HEK293 (cell line): ENCODE measurements at regions of chr1 and their contacts with region 1.

Region 1: DNA sequence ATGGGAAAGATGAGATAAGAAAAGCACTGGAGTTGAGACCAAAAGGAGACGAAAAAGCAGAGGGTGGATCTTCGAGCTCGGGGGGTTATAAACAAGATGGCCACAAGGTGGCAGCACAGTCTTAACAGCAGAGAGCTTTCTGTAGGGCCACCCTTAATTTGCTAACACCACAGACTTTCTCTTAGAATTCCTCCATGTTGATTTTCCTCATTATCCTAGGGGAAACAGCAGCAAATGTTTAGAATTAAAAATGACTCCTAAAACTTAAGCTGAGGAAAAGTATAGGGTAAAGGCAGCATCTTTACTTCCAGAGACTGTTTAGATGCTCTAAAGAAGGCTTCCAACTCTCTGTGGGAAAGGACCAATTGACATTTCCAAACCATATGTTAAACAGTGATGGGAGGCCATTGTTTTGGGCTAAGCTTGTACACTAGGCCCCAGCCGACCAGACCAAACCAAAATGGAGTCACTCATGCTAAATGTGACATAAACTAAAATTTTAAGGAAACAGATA is 2.5 kb upstream of the APOBEC4 start:
- H3K4me3 ChIP-seq: no peak overlapping the region
- H3K27ac ChIP-seq: no peak overlapping the region
- H3K4me1 ChIP-seq: no peaks in the 10 kb centered on the region
- CTCF ChIP-seq: peak; percentile 61

Region 2: DNA sequence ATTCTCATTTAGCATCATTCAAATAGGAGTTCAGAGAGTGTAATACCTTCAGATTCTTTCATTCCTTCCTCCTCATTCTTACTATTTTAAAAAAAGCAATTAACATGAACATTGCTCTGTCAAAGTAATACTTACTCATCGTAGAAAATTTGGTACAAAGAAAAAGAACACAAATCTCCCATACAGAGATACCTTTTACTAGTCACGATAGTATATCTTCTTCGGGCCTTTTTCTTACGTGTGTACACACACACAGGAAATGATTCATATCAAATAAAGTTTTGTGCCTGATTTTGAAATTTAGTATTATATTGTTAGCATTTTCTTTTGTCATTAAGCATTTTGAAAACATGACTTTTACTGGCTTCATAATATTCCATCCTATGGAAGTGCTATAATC is 118.2 kb before region 1 on chr1:
- CTCF ChIA-PET with region 1: no interaction called
- POLR2A ChIA-PET with region 1: no interaction called
- H3K4me3 ChIP-seq: no peak overlapping the region
- H3K27ac ChIP-seq: no peak overlapping the region
- H3K4me1 ChIP-seq: no peaks in the 10 kb centered on the region
- CTCF ChIP-seq: no peak

Region 3: DNA sequence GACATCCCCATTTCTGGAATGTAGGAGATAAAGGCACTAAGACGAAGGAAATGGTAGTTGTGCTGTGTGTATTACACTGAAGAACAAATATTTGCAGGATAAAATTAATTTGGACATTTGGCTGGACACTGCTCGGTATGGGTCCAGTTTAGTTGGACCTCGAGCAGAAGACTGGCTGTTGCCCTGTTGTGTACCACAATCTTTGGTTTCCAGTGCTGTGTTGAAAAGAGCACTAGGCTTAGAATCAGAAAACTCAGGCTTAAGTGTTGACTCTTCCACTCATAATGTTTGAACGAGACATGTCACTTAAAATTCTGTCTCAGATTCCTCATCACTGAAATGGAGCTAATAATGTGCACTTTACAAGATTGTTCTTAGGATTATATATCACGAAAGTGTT is 18.8 kb before region 1 on chr1:
- CTCF ChIA-PET with region 1: interaction called, 16 read pairs
- POLR2A ChIA-PET with region 1: no interaction called
- H3K4me3 ChIP-seq: peak overlapping the region; percentile 96
- H3K27ac ChIP-seq: no peak overlapping the region
- H3K4me1 ChIP-seq: peaks cover 14% of the 10 kb centered on the region; the same call in 1 of the 2 replicates
- CTCF ChIP-seq: no peak

Region 4: GRCh38 chr1:183685112-183685713 is 29.6 kb after region 1 on chr1:
- CTCF ChIA-PET with region 1: interaction called, 93 read pairs
- POLR2A ChIA-PET with region 1: interaction called, 3 read pairs
- H3K4me3 ChIP-seq: no peak overlapping the region
- H3K27ac ChIP-seq: no peak overlapping the region
- H3K4me1 ChIP-seq: no peaks in the 10 kb centered on the region
- CTCF ChIP-seq: 0 out of 2 replicates have a peak, but pooled peaks have one; percentile 20

Region 5: DNA sequence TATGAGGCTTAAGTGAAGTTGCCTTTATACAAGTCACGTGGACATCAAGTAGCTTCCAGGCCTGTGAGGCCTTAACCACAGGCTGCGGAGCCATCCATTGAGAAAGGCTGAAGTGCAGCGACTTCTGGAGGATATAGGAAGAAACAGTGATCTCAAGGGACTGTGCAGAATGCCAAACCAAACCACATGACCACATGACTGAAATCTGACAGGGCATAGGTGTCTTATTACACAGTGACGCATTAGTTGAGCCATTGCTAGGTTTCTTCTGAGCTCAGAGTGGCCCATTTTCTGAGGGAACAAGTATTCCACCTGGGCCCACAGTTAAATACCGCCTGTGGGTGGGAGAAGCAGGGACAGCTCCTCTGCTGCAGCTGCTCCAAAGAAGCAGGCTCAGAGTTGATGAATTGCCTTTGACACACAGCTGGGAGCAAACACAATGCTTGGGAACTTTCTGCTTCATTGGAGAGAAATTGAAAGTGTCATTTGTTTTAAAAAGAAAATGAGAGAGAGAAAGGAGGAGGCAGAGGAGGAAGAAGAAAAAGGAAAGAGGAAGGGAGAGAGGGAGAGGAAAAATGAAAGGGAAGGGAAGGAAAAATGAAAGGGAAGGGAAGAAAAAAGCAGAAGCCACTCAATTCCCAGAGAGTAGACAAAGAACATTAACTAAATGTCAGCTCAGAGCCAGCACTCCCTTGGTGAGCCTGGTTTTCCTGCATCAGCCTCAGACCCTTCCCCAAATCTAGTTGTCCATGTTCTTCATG is 287.5 kb after region 1 on chr1:
- CTCF ChIA-PET with region 1: interaction called, 11 read pairs
- POLR2A ChIA-PET with region 1: no interaction called
- H3K4me3 ChIP-seq: no peak overlapping the region
- H3K27ac ChIP-seq: 0 out of 2 replicates have a peak overlapping the region, but pooled peaks have one; percentile 6
- H3K4me1 ChIP-seq: peaks cover 8% of the 10 kb centered on the region; the same call in 1 of the 2 replicates
- CTCF ChIP-seq: peak; percentile 25; the same call in 1 of the 2 replicates